Activated CD8-positive, alpha-beta memory T cell treated with anti-CD3 and anti-CD28 coated beads, Interleukin-2, amount 10 ng/mL, durations not matched to agents 7 days and 5 days (primary cell): ENCODE measurements at regions of chr12 and their contacts with region 1.

Region 1: DNA sequence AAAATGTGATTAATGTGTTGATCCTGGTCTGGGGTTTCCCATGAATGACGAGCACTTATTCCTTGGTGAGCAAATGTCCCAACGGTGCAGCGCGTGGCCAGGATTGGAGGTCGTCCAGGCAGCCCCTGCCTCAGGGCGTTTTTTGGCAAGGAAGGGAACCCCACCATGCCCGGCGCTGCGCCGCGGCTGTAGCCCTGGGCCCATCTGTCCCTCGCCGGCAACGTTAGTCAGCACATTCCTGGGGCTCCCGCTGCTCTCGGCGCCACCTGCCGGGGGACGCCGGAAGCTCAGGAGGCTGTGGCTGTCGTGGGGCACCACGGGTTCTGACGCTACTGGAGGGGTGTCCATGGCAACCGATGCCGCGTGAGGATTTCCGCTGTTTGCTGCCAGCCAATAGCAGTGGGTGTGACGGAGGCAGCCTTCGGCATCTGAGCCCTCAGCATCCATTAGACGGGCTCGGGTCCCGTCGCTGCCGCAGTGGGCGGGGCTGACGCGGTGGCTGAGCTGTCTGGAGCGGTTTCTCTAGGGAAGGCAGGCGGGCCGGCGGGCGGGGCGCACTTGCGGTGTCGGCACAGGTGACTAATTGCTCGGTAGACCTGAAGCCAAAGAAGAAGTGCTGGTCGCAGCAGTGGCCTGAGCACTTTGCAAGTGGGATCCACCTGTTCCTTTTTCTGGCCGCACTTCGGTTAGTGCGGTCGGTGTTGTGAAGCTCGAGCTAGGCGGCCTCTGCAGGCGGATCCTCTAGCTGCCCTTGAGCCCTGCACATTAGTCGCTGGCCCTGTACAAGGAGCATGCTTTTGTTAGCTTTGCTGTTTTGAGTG is 29.5 kb downstream of the RAB35 start:
- DNase-seq: peak; percentile 100
- ATAC-seq: peak; percentile 95
- H3K4me3 Mint-ChIP-seq: peak overlapping the region; percentile 70
- H3K27ac Mint-ChIP-seq: peak overlapping the region; percentile 84
- H3K4me1 Mint-ChIP-seq: peaks cover 46% of the 10 kb centered on the region
- H3K27me3 Mint-ChIP-seq: no peaks in the 10 kb centered on the region

Region 2: GRCh38 chr12:119375075-119375882 is 711.7 kb before region 1 on chr12:
- CTCF ChIA-PET with region 1: no interaction called
- DNase-seq: peak; percentile 70
- ATAC-seq: peak; percentile 82
- H3K4me3 Mint-ChIP-seq: no peak overlapping the region
- H3K27ac Mint-ChIP-seq: peak overlapping the region; percentile 82
- H3K4me1 Mint-ChIP-seq: peaks cover 23% of the 10 kb centered on the region
- H3K27me3 Mint-ChIP-seq: peaks cover 25% of the 10 kb centered on the region

Region 3: GRCh38 chr12:119988782-119989668 is 98.0 kb before region 1 on chr12 and contains the start of gene BICDL1:
- CTCF ChIA-PET with region 1: interaction called, 26 read pairs
- DNase-seq: peak; percentile 98
- ATAC-seq: peak; percentile 85
- H3K4me3 Mint-ChIP-seq: peak within 1 kb of the TSS; percentile 83
- H3K27ac Mint-ChIP-seq: peak within 1 kb of the TSS; percentile 80
- H3K4me1 Mint-ChIP-seq: peaks cover 30% of the 10 kb centered on the region
- H3K27me3 Mint-ChIP-seq: peaks cover 13% of the 10 kb centered on the region
- total RNA-seq, gene BICDL1: 59.8 to 62.9 TPM

Region 4: GRCh38 chr12:120012067-120012621 is 74.9 kb before region 1 on chr12:
- CTCF ChIA-PET with region 1: interaction called, 13 read pairs
- DNase-seq: peak; percentile 90
- ATAC-seq: peak; percentile 79
- H3K4me3 Mint-ChIP-seq: peak overlapping the region; percentile 60
- H3K27ac Mint-ChIP-seq: peak overlapping the region; percentile 90
- H3K4me1 Mint-ChIP-seq: peaks cover 84% of the 10 kb centered on the region
- H3K27me3 Mint-ChIP-seq: no peaks in the 10 kb centered on the region

Region 5: DNA sequence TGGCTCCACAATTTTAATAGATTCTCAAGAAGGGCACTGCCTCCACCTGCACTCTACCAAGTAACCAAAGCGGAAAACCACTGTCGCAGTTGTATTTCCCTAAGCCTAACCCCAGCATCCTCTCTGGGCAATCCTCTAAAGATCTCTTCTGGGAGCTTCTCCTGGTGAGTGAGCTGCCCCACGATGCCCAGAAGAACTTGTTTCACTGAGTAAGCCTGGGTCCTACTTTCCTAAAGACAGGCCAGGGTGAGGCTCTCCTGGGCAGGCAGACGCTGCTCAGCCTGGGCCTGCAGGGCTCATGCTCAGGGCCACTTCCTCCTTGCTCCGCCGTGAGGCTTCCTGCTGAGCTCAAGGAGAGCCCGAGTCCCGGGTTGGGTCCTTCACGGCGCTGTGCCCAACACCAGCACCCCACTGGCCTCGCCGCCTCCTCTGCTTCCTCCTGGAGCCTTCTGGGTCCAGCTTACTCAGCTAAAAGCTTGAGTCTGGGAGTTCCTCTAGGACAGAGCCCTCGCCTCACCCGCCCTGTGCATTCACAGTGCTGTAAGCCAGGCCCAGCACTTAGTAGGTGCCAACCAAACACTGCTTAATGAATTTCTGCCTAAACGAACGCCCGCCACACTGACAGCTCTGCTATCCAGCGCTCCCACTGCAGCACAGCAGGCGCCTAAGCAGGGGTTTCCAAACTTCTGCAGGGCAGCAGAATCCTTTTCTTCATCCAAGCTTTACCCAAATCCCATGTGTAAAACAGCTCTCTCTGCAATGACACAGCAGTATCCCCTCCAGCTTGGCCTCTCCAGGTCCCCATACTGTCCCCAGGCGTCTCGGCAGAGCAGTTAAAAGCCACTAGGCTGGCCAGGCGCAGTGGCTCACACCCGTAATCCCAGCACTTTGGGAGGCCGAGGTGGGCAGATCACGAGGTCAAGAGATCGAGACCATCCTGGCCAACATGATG is 23.8 kb after region 1 on chr12:
- CTCF ChIA-PET with region 1: interaction called, 16 read pairs
- DNase-seq: peak; percentile 78
- ATAC-seq: peak; percentile 87
- H3K4me3 Mint-ChIP-seq: peak overlapping the region; percentile 63
- H3K27ac Mint-ChIP-seq: peak overlapping the region; percentile 86
- H3K4me1 Mint-ChIP-seq: peaks cover 62% of the 10 kb centered on the region
- H3K27me3 Mint-ChIP-seq: no peaks in the 10 kb centered on the region

Region 6: GRCh38 chr12:120116792-120117651 is 30.0 kb after region 1 on chr12:
- CTCF ChIA-PET with region 1: interaction called, 16 read pairs
- DNase-seq: peak; percentile 98
- ATAC-seq: peak; percentile 81
- H3K4me3 Mint-ChIP-seq: peak overlapping the region; percentile 81
- H3K27ac Mint-ChIP-seq: peak overlapping the region; percentile 83
- H3K4me1 Mint-ChIP-seq: peaks cover 74% of the 10 kb centered on the region
- H3K27me3 Mint-ChIP-seq: no peaks in the 10 kb centered on the region